ENCODE measurements at regions of chr10 and their contacts with region 1.

Region 1: GRCh38 chr10:59625721-59626522 is 83.7 kb downstream of the SLC16A9 start:
- DNase-seq: peak; percentile 36
- H3K4me3 Mint-ChIP-seq: no peak overlapping the region
- H3K27ac Mint-ChIP-seq: no peak overlapping the region
- H3K4me1 Mint-ChIP-seq: peaks cover 6% of the 10 kb centered on the region
- H3K27me3 Mint-ChIP-seq: peaks cover 18% of the 10 kb centered on the region

Region 2: GRCh38 chr10:58781873-58782488 is 843.9 kb before region 1 on chr10:
- intact Hi-C with region 1: loop called (anchors 1 kb)
- DNase-seq: no peak
- H3K4me3 Mint-ChIP-seq: no peak overlapping the region
- H3K27ac Mint-ChIP-seq: no peak overlapping the region
- H3K4me1 Mint-ChIP-seq: no peaks in the 10 kb centered on the region
- H3K27me3 Mint-ChIP-seq: no peaks in the 10 kb centered on the region

Region 3: GRCh38 chr10:59606551-59606961 is 19.4 kb before region 1 on chr10:
- intact Hi-C with region 1: no loop called
- DNase-seq: no peak
- H3K4me3 Mint-ChIP-seq: no peak overlapping the region
- H3K27ac Mint-ChIP-seq: no peak overlapping the region
- H3K4me1 Mint-ChIP-seq: no peaks in the 10 kb centered on the region
- H3K27me3 Mint-ChIP-seq: peaks cover 2% of the 10 kb centered on the region

Region 4: DNA sequence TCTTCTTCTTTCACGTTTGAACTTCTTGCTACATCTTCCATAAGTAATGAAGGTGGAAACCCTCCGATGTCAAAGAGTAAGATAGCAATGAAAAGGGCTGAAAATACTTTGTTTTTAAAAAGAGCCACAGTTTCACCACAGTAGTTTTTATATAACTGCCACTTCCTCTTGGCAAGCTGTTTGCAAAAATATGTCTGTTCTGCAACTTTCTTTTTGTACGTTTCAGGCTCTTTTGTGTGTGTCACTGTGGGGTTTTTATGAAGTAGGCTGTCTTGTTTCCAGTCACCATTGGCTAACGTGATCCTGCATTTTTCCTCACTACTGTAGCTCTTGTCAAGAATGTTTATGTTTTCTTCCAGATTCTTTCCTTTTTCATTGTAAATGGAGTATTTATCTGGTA is 28.1 kb after region 1 on chr10:
- intact Hi-C with region 1: no loop called
- DNase-seq: no peak
- H3K4me3 Mint-ChIP-seq: peak overlapping the region; percentile 8
- H3K27ac Mint-ChIP-seq: no peak overlapping the region
- H3K4me1 Mint-ChIP-seq: peaks cover 11% of the 10 kb centered on the region
- H3K27me3 Mint-ChIP-seq: no peaks in the 10 kb centered on the region

Region 5: GRCh38 chr10:59709395-59710125 is 83.6 kb after region 1 on chr10 and contains the start of gene SLC16A9:
- intact Hi-C with region 1: loop called (anchors 1 kb)
- DNase-seq: peak; percentile 67
- H3K4me3 Mint-ChIP-seq: peak within 1 kb of the TSS; percentile 77
- H3K27ac Mint-ChIP-seq: peak within 1 kb of the TSS; percentile 75
- H3K4me1 Mint-ChIP-seq: peaks cover 10% of the 10 kb centered on the region
- H3K27me3 Mint-ChIP-seq: peaks cover 46% of the 10 kb centered on the region
- total RNA-seq, gene SLC16A9: 4.2 and 5.4 TPM in 2 replicates

Region 6: GRCh38 chr10:60032723-60033122 is 406.8 kb after region 1 on chr10:
- intact Hi-C with region 1: loop called (anchors 1 kb)
- DNase-seq: no peak
- H3K4me3 Mint-ChIP-seq: no peak overlapping the region
- H3K27ac Mint-ChIP-seq: no peak overlapping the region
- H3K4me1 Mint-ChIP-seq: peaks cover 5% of the 10 kb centered on the region
- H3K27me3 Mint-ChIP-seq: no peaks in the 10 kb centered on the region

Region 7: GRCh38 chr10:60208676-60209269 is 582.9 kb after region 1 on chr10:
- intact Hi-C with region 1: loop called (anchors 5 kb)
- DNase-seq: no peak
- H3K4me3 Mint-ChIP-seq: no peak overlapping the region
- H3K27ac Mint-ChIP-seq: no peak overlapping the region
- H3K4me1 Mint-ChIP-seq: peaks cover 36% of the 10 kb centered on the region
- H3K27me3 Mint-ChIP-seq: no peaks in the 10 kb centered on the region